Calu3 (cell line): ENCODE measurements at regions of chr5 and their contacts with region 1.

Region 1: GRCh38 chr5:106749826-106750225 is 920.9 kb downstream of the EFNA5 start:
- DNase-seq: no peak
- H3K4me3 Mint-ChIP-seq: no peak overlapping the region
- H3K27ac Mint-ChIP-seq: no peak overlapping the region
- H3K4me1 Mint-ChIP-seq: no peaks in the 10 kb centered on the region
- H3K27me3 Mint-ChIP-seq: no peaks in the 10 kb centered on the region
- CTCF ChIP-seq: no peak

Region 2: DNA sequence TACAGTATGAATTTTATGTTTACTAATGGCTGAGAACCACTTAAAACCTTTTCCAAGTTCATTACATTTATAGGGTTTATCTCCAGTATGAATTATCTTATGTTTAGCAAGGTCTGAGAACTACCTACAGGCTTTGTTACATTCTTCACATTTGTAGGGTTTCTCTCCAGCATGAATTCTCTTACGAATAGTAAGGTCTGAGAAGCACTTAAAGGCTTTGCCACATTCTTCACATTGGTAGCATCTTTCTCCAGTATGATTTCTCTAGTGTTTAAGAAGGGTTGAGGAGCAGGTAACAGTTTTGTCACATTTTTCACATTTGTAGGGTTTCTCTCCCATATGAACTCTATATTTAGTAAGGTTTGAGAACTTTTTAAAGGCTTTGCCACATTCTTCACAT is 206.5 kb before region 1 on chr5:
- CTCF ChIA-PET with region 1: no interaction called
- intact Hi-C with region 1: no loop called
- DNase-seq: no peak
- H3K4me3 Mint-ChIP-seq: no peak overlapping the region
- H3K27ac Mint-ChIP-seq: no peak overlapping the region
- H3K4me1 Mint-ChIP-seq: no peaks in the 10 kb centered on the region
- H3K27me3 Mint-ChIP-seq: no peaks in the 10 kb centered on the region
- CTCF ChIP-seq: no peak

Region 3: GRCh38 chr5:106648401-106648800 is 101.4 kb before region 1 on chr5:
- CTCF ChIA-PET with region 1: no interaction called
- intact Hi-C with region 1: loop called (anchors 5 kb)
- DNase-seq: no peak
- H3K4me3 Mint-ChIP-seq: no peak overlapping the region
- H3K27ac Mint-ChIP-seq: no peak overlapping the region
- H3K4me1 Mint-ChIP-seq: no peaks in the 10 kb centered on the region
- H3K27me3 Mint-ChIP-seq: no peaks in the 10 kb centered on the region
- CTCF ChIP-seq: no peak